ENCODE measurements at regions of chr7 and their contacts with region 1.

Region 1: GRCh38 chr7:90312745-90313144 is 8.4 kb downstream of the FAM237B start:
- DNase-seq: no peak
- H3K4me3 Mint-ChIP-seq: no peak overlapping the region
- H3K27ac Mint-ChIP-seq: no peak overlapping the region
- H3K4me1 Mint-ChIP-seq: no peaks in the 10 kb centered on the region
- H3K27me3 Mint-ChIP-seq: no peaks in the 10 kb centered on the region
- CTCF ChIP-seq: no peak

Region 2: DNA sequence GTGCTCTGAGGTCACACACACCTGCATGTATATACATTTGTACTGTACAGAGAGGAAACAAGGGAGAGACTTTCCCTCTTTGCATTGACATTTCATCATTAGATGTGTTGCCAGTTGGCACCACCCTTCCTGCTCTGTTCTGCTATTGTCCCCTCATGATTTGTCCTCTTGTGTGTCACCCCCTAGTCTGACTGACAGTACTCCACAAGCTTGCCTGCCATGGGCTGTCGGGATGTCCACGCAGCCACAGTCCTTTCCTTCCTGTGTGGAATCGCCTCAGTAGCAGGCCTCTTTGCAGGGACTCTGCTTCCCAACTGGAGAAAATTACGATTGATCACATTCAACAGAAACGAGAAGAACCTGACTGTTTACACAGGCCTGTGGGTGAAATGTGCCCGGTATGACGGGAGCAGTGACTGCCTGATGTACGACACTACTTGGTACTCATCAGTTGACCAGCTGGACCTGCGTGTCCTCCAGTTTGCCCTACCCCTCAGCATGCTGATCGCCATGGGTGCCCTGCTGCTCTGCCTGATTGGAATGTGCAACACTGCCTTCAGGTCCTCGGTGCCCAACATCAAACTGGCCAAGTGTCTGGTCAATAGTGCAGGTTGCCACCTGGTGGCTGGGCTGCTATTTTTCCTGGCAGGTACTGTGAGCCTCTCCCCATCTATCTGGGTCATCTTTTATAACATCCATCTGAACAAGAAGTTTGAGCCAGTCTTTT is 99.9 kb after region 1 on chr7:
- CTCF ChIA-PET with region 1: interaction called, 6 read pairs
- intact Hi-C with region 1: loop called (anchors 1 kb)
- DNase-seq: peak; percentile 66
- H3K4me3 Mint-ChIP-seq: no peak overlapping the region
- H3K27ac Mint-ChIP-seq: no peak overlapping the region
- H3K4me1 Mint-ChIP-seq: peaks cover 19% of the 10 kb centered on the region
- H3K27me3 Mint-ChIP-seq: no peaks in the 10 kb centered on the region
- CTCF ChIP-seq: no peak

Region 3: GRCh38 chr7:90424720-90425119 is 112.0 kb after region 1 on chr7:
- CTCF ChIA-PET with region 1: interaction called, 18 read pairs
- intact Hi-C with region 1: loop called (anchors 2 kb)
- DNase-seq: no peak
- H3K4me3 Mint-ChIP-seq: no peak overlapping the region
- H3K27ac Mint-ChIP-seq: no peak overlapping the region
- H3K4me1 Mint-ChIP-seq: peaks cover 16% of the 10 kb centered on the region
- H3K27me3 Mint-ChIP-seq: no peaks in the 10 kb centered on the region
- CTCF ChIP-seq: no peak